Posterior vena cava (tissue), 2 donors: ENCODE measurements at regions of chr12 and their contacts with region 1.

Region 1: GRCh38 chr12:106136263-106136662 is 2.5 kb downstream of the NUAK1 start:
- DNase-seq: peak; percentile 96

Region 2: GRCh38 chr12:105420659-105421240 is 715.5 kb before region 1 on chr12:
- intact Hi-C with region 1: loop called (anchors 2 to 5 kb)
- DNase-seq: peak; percentile 90

Region 3: GRCh38 chr12:105705765-105706164 is 430.5 kb before region 1 on chr12:
- intact Hi-C with region 1: loop called (anchors 5 to 10 kb)
- DNase-seq: no peak

Region 4: DNA sequence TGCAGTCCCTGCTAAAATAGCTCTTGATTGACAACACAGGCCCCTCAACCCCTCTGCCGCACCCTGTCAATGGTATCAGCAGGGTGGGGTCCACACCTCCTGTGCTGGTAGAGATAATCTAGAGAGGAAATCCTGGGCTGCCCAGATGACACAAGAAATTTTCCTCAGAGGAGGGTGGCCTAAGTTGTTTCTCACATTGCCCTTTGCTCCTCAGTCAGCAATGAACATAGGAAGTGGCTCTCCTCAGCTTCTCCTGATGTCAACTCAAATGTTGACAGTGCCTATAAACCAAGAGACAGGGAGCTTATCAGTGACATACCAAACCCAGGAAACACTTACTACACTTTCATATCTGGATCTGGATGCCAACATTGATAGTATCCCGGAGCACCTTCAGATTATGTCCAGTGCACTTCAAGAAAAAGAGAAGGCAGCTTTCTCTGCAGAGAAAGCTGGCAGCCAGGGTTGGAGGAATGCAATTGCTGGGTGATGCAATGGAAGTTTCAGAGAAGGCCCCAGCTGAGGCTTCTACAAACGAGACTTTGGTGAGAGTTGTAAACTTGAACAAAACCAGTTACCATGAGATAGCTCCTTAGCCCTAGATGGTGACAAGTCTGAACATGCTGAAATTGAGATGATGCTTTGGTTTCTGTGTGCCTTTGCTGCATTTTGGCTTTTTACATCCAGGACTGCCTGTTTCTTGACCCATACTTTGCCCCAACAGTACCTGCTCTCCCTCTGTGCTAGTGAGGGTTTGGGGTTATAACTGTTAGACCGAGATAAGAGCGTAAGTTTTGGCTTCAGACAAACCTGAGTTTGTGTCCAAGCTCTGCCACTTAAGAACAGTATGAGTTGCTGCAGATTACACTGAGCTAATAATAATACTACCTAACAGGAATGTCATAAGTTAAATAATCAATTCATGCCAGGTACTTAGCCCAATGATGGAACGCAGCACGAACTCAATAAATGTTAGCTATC is 181.0 kb before region 1 on chr12:
- intact Hi-C with region 1: loop called in 1 of 2 experiments (anchors 10 kb)
- DNase-seq: no peak